ENCODE measurements at regions of chr12 and their contacts with region 1.

Region 1: DNA sequence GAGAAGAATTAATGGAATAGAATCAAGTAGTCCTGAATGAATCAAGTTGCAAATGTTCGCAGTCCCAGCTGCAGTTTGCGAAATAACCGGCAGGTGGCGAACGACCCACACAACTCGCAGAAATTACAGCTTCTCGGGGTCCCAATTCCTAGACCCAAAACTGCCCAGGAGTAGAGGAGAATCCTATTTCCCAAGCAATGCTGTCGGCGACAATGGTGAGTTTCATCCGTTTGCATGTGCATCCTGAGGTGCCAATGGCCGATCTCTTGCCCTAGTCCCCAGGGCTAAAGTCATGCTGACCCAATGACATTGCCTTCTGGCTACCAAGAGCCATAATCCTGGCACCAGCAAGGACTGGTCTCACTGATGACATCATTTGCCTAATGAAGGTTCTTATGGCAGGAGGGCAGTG is 8.5 kb upstream of the ASCL1 start:
- DNase-seq: peak; percentile 38
- CTCF ChIP-seq: peak; percentile 91

Region 2: DNA sequence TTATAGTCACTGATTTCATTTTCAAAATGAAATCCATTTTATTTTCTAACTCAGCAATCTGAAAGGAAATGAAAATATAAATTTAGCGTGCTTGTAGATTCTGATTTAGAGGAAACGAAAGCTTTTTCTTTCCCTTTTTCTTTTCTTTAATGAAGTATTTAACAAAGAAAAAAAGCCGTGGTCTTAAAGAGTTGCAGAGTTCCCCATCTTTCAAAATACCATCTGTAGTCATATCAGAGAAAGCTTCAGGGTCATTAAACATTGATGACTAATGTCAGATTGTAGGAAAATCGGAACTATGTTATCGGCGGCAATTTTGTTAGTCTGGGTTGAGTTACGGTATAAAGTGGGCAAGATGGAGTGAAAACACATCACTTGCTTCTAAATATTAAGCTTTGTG is 1039.3 kb before region 1 on chr12:
- CTCF ChIA-PET with region 1: no interaction called
- POLR2A ChIA-PET with region 1: no interaction called
- DNase-seq: no peak
- CTCF ChIP-seq: no peak

Region 3: GRCh38 chr12:102781117-102781516 is 167.8 kb before region 1 on chr12:
- CTCF ChIA-PET with region 1: no interaction called
- POLR2A ChIA-PET with region 1: no interaction called
- DNase-seq: no peak
- CTCF ChIP-seq: no peak

Region 4: DNA sequence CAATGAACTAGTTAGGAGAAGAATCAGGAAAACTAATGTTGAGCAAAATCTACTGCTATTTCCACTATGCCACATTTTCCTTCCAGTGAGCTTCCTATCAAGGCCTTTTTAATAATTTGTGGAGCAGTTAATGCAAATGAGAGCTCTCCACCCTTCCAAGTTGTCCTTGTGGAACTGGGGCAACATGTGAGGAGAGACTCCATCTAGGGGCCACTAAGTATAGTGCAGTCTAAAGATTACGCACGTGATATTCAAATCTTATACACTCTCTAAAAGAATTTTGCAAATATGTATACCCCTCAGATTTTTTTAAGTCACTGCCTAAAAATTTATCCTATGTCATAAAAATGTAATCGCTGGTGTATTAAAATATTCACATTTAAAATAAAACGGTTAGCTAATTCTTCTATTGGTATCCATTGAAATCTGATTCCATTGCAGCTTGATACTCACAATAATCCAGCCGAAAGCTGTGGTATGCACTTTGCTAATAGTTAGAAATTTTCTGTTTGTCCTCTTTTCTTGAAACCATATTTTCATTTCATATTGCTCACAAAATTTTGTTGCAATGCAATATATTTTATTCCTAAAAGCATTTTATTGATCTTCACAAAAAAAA is 132.0 kb before region 1 on chr12:
- CTCF ChIA-PET with region 1: no interaction called
- POLR2A ChIA-PET with region 1: no interaction called
- DNase-seq: peak; percentile 23
- CTCF ChIP-seq: peak; percentile 36

Region 5: DNA sequence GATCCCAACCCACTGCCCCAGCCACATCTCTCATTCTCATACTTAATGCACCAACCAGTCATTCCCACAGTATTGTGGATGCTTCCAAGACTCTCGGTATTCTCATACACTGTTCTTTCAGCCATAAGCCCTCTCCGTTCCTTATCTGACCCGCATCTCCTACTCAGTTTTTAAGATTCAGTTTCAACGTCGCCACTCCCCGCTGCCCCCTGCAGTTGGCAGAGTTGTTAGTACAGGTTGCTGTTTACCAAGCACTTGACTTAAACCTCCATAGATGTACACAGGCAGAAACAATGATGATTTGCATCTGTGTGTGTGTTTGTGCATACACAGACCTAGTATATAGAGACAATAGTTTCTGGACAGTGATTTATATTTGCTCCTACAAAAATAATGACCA is 72.1 kb before region 1 on chr12:
- CTCF ChIA-PET with region 1: no interaction called
- POLR2A ChIA-PET with region 1: no interaction called
- DNase-seq: no peak
- CTCF ChIP-seq: no peak

Region 6: GRCh38 chr12:102960766-102961465 is 12.0 kb after region 1 on chr12:
- CTCF ChIA-PET with region 1: interaction called, 14 read pairs
- POLR2A ChIA-PET with region 1: no interaction called
- DNase-seq: no peak
- CTCF ChIP-seq: no peak

Region 7: GRCh38 chr12:102990419-102990818 is 41.5 kb after region 1 on chr12:
- CTCF ChIA-PET with region 1: interaction called, 16 read pairs
- POLR2A ChIA-PET with region 1: no interaction called
- DNase-seq: no peak
- CTCF ChIP-seq: peak; percentile 38

Region 8: GRCh38 chr12:103495479-103496456 is 546.8 kb after region 1 on chr12 and contains the start of gene C12orf42:
- CTCF ChIA-PET with region 1: interaction called, 18 read pairs
- POLR2A ChIA-PET with region 1: no interaction called
- DNase-seq: peak; percentile 78
- CTCF ChIP-seq: peak; percentile 75

Region 9: GRCh38 chr12:103503977-103504376 is 555.0 kb after region 1 on chr12:
- CTCF ChIA-PET with region 1: interaction called, 40 read pairs
- POLR2A ChIA-PET with region 1: no interaction called
- DNase-seq: peak; percentile 51
- CTCF ChIP-seq: peak; percentile 72

Region 10: DNA sequence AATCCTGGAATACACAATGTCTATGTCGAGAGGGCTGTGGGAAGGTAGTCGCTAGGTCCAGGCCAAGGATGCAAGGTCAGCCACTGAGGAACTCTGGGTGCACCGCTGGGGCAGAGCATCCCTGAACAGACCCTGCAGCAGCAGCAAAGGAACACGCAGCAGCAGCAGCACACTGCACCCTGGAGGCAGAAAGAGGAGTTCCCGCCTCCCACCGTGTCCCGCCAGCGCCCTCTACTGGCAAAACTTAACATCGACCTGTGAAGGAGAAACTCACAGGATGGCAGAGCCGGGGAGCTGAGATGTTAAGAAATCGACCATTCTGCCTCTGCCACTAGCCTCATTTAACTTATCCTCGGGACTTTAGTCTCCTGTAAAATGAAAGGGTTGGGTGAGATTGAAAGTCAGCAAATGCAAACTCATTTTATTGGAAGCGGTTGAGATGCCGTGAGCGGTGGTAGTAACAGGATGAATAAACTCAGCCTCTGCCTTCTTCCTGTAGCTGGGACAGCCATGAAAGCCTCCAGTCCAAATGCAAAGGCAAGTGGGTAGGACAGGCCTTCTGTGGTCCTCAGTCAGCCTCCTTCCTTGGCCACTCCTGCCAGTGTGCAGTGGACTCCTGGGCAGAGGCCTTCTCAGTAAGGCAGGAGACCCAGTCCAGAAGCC is 683.7 kb after region 1 on chr12:
- CTCF ChIA-PET with region 1: interaction called, 16 read pairs
- POLR2A ChIA-PET with region 1: no interaction called
- DNase-seq: peak; percentile 87
- CTCF ChIP-seq: peak; percentile 98

Measured in GM10248 (cell line).